A549 (cell line): ENCODE measurements at regions of chr12 and their contacts with region 1.

Region 1: GRCh38 chr12:112198120-112198733 is 72.9 kb downstream of the TRAFD1 start:
- DNase-seq: peak; percentile 75 to 81
- ATAC-seq: peak; percentile 97 to 98
- H3K4me3 ChIP-seq: no peak overlapping the region
- H3K27ac ChIP-seq: no peak overlapping the region
- H3K4me1 ChIP-seq: no peaks in the 10 kb centered on the region
- CTCF ChIP-seq: peak; percentile 71
- EP300 ChIP-seq: no peak
- POLR2A ChIP-seq: no peak
- RAD21 ChIP-seq: peak; percentile 60 to 77

Region 2: DNA sequence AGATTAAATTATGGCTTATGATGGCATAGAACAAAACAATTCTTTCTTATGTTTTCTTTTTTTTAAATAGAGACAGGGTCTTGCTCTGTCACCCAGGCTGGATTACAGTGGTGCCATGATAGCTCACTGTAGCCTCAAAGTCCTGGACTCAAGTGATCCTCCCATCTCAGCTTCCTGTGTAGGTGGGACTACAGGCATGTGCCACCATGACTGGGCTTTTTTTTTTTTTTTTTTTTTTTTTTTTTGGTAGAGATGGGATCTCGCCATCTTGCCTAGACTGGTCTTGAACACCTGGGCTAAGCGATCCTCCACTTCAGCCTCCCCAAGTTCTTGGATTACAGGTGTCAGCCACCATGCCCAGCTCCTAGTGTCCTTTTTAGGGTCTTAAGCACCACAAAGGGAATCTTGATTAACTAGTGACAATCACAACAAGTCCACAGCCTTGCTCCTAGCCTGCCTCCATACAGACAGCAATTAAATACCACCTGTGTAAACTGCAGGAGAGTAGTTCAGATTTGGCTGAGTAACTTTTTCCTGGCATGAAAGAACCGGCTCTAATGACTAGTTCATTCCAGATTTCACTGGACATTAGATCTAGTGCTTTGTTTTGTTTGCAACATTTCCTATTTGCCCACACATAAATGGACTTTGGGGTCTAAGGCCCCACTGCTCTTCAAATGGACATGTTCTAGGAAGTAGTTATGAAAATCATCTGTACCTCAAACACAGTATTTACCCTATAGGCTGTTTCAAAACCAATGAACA is 731.0 kb before region 1 on chr12:
- CTCF ChIA-PET with region 1: no interaction called
- POLR2A ChIA-PET with region 1: no interaction called
- DNase-seq: peak in 1 of 2 experiments; percentile 50
- ATAC-seq: peak in 1 of 2 experiments; percentile 53; a peak in 3 of 6 replicates
- H3K4me3 ChIP-seq: no peak overlapping the region
- H3K27ac ChIP-seq: peak overlapping the region in 1 of 2 experiments; percentile 0; a peak in 1 of 6 replicates
- H3K4me1 ChIP-seq: peaks cover 26% of the 10 kb centered on the region
- CTCF ChIP-seq: no peak
- EP300 ChIP-seq: no peak
- POLR2A ChIP-seq: no peak
- RAD21 ChIP-seq: no peak

Region 3: DNA sequence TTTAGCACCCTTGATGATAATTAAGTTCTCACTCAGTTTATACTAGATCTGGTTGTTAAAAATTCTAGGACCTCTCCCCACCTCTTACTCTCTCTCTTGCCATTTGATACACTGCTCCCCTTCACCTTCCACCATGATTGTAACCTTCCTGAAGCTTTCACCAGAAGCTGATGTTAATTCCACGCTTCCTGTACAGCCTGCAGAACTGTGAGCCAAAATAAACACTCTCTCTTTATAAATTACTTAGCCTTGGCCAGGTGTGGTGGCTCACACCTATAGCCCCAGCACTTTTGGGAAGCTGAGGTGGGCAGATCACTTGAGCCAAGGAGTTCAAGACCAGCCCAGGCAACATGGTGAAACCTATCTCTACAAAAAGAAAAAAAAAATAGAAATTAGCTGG is 195.1 kb after region 1 on chr12:
- CTCF ChIA-PET with region 1: interaction called, 80 read pairs
- POLR2A ChIA-PET with region 1: no interaction called
- DNase-seq: no peak
- ATAC-seq: no peak
- H3K4me3 ChIP-seq: no peak overlapping the region
- H3K27ac ChIP-seq: no peak overlapping the region
- H3K4me1 ChIP-seq: no peaks in the 10 kb centered on the region
- CTCF ChIP-seq: no peak
- EP300 ChIP-seq: no peak
- POLR2A ChIP-seq: no peak
- RAD21 ChIP-seq: no peak